ENCODE measurements at regions of chr1 and their contacts with region 1.

Region 1: GRCh38 chr1:233394860-233395717 is 67.6 kb downstream of the MAP3K21 start:
- DNase-seq: peak; percentile 35
- H3K4me3 Mint-ChIP-seq: no peak overlapping the region
- H3K27ac Mint-ChIP-seq: no peak overlapping the region
- H3K4me1 Mint-ChIP-seq: no peaks in the 10 kb centered on the region
- H3K27me3 Mint-ChIP-seq: peaks cover 30% of the 10 kb centered on the region

Region 2: DNA sequence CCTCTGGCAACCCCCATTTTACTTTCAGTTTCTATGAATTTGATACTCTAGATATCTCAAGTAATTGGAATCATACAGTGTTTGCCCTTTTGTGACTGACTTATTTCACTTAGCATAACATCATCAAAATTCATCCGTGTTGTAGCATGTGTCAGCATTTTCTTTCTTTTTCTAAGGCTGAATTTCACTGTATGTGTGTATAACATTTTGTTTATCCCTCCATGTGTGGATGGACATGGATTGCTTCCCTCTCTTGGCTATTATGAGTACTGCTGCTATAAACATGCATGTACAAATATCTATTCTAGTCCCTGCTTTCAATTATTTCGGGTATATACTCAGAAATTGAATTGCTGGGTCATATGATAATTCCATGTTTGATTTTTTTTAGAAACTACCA is 29.7 kb after region 1 on chr1:
- CTCF ChIA-PET with region 1: interaction called, 3 read pairs
- POLR2A ChIA-PET with region 1: no interaction called
- intact Hi-C with region 1: loop called (anchors 2 kb)
- DNase-seq: no peak
- H3K4me3 Mint-ChIP-seq: no peak overlapping the region
- H3K27ac Mint-ChIP-seq: no peak overlapping the region
- H3K4me1 Mint-ChIP-seq: peaks cover 6% of the 10 kb centered on the region
- H3K27me3 Mint-ChIP-seq: peaks cover 10% of the 10 kb centered on the region

Region 3: GRCh38 chr1:233440951-233441401 is 45.9 kb after region 1 on chr1:
- CTCF ChIA-PET with region 1: interaction called, 18 read pairs
- POLR2A ChIA-PET with region 1: no interaction called
- intact Hi-C with region 1: loop called (anchors 1 kb)
- DNase-seq: peak; percentile 9
- H3K4me3 Mint-ChIP-seq: no peak overlapping the region
- H3K27ac Mint-ChIP-seq: no peak overlapping the region
- H3K4me1 Mint-ChIP-seq: no peaks in the 10 kb centered on the region
- H3K27me3 Mint-ChIP-seq: peaks cover 10% of the 10 kb centered on the region

Region 4: GRCh38 chr1:233518349-233518748 is 123.3 kb after region 1 on chr1:
- CTCF ChIA-PET with region 1: interaction called, 4 read pairs
- POLR2A ChIA-PET with region 1: no interaction called
- intact Hi-C with region 1: loop called (anchors 10 kb)
- DNase-seq: peak; percentile 50
- H3K4me3 Mint-ChIP-seq: no peak overlapping the region
- H3K27ac Mint-ChIP-seq: no peak overlapping the region
- H3K4me1 Mint-ChIP-seq: peaks cover 2% of the 10 kb centered on the region
- H3K27me3 Mint-ChIP-seq: peaks cover 2% of the 10 kb centered on the region

Region 5: GRCh38 chr1:233790662-233791375 is 395.7 kb after region 1 on chr1:
- CTCF ChIA-PET with region 1: interaction called, 7 read pairs
- POLR2A ChIA-PET with region 1: no interaction called
- intact Hi-C with region 1: loop called (anchors 1 kb)
- DNase-seq: peak; percentile 34
- H3K4me3 Mint-ChIP-seq: no peak overlapping the region
- H3K27ac Mint-ChIP-seq: no peak overlapping the region
- H3K4me1 Mint-ChIP-seq: no peaks in the 10 kb centered on the region
- H3K27me3 Mint-ChIP-seq: peaks cover 14% of the 10 kb centered on the region

Region 6: GRCh38 chr1:234065794-234066447 is 670.8 kb after region 1 on chr1:
- CTCF ChIA-PET with region 1: interaction called, 15 read pairs
- POLR2A ChIA-PET with region 1: no interaction called
- intact Hi-C with region 1: no loop called
- DNase-seq: peak; percentile 76
- H3K4me3 Mint-ChIP-seq: no peak overlapping the region
- H3K27ac Mint-ChIP-seq: no peak overlapping the region
- H3K4me1 Mint-ChIP-seq: no peaks in the 10 kb centered on the region
- H3K27me3 Mint-ChIP-seq: peaks cover 12% of the 10 kb centered on the region